ENCODE measurements at regions of chr6 and their contacts with region 1.

Region 1: GRCh38 chr6:96626759-96627364 is 63.9 kb downstream of the FHL5 start:
- DNase-seq: no peak
- H3K4me3 ChIP-seq: no peak overlapping the region
- H3K27ac ChIP-seq: no peak overlapping the region
- H3K4me1 ChIP-seq: no peaks in the 10 kb centered on the region
- H3K27me3 ChIP-seq: no peaks in the 10 kb centered on the region
- CTCF ChIP-seq: peak in 5 of 6 experiments; percentile 50 to 71 (median 60)
- POLR2A ChIP-seq: no peak

Region 2: DNA sequence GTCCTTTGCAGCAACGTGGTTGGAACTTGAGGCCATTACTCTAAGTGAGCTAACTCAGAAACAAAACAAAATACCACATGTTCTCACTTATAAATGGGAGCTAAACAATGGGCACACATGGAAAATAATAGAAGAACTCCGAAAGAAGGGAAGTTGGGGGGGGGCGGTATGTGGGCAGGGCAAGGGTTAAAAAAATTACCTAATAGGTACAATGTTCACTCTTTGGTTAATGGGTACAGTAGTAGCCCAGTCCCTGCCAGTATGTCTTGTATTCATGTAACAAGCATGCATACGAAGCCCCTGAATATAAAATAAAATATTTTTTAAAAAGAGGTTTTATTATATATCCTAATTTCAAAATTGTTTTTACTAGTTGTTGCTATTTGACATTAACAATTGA is 79.2 kb before region 1 on chr6:
- intact Hi-C with region 1: no loop called
- DNase-seq: no peak
- H3K4me3 ChIP-seq: no peak overlapping the region
- H3K27ac ChIP-seq: no peak overlapping the region
- H3K4me1 ChIP-seq: no peaks in the 10 kb centered on the region
- H3K27me3 ChIP-seq: no peaks in the 10 kb centered on the region
- CTCF ChIP-seq: no peak
- POLR2A ChIP-seq: no peak

Region 3: GRCh38 chr6:96897383-96898240 is 270.8 kb after region 1 on chr6 and contains the start of gene NDUFAF4:
- intact Hi-C with region 1: loop called in 1 of 2 experiments (anchors 5 kb)
- DNase-seq: peak; percentile 95 to 98 (median 97)
- H3K4me3 ChIP-seq: peak within 1 kb of the TSS; percentile 48 to 91 (median 86)
- H3K27ac ChIP-seq: peak within 1 kb of the TSS; percentile 86 to 98 (median 88)
- H3K4me1 ChIP-seq: peaks cover 17 to 26% of the 10 kb centered on the region in 2 donors
- H3K27me3 ChIP-seq: no peaks in the 10 kb centered on the region
- CTCF ChIP-seq: peak; percentile 80 to 98 (median 96)
- POLR2A ChIP-seq: peak in 1 of 2 donors; percentile 70
- total RNA-seq, gene NDUFAF4: 11.4 to 73.5 (median 29.0) TPM

Region 4: DNA sequence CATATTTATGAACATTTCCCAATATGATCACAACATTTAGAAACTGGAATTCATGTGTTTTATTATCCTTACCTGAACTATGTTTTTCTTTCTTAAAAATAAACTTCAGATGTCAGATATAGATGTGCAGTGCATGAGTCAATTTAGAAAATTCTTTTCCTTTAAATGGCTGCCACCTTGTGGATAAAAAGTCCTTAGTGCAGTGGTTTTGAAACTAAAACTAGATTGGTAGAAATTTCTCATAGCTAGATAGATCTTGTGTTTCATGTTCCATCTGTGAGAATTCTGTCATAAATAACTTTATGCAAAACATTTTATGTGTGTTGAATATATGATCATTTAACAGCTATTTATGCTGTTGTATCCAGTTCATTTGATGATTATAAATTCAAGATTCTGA is 432.6 kb after region 1 on chr6:
- intact Hi-C with region 1: loop called (anchors 5 kb)
- DNase-seq: no peak
- H3K4me3 ChIP-seq: no peak overlapping the region
- H3K27ac ChIP-seq: no peak overlapping the region
- H3K4me1 ChIP-seq: no peaks in the 10 kb centered on the region
- H3K27me3 ChIP-seq: no peaks in the 10 kb centered on the region
- CTCF ChIP-seq: peak; percentile 32 to 69 (median 58)
- POLR2A ChIP-seq: no peak

Measured in adrenal gland (tissue), 19 donors.